Ascending aorta (tissue), 2 donors: ENCODE measurements at regions of chr15 and their contacts with region 1.

Region 1: DNA sequence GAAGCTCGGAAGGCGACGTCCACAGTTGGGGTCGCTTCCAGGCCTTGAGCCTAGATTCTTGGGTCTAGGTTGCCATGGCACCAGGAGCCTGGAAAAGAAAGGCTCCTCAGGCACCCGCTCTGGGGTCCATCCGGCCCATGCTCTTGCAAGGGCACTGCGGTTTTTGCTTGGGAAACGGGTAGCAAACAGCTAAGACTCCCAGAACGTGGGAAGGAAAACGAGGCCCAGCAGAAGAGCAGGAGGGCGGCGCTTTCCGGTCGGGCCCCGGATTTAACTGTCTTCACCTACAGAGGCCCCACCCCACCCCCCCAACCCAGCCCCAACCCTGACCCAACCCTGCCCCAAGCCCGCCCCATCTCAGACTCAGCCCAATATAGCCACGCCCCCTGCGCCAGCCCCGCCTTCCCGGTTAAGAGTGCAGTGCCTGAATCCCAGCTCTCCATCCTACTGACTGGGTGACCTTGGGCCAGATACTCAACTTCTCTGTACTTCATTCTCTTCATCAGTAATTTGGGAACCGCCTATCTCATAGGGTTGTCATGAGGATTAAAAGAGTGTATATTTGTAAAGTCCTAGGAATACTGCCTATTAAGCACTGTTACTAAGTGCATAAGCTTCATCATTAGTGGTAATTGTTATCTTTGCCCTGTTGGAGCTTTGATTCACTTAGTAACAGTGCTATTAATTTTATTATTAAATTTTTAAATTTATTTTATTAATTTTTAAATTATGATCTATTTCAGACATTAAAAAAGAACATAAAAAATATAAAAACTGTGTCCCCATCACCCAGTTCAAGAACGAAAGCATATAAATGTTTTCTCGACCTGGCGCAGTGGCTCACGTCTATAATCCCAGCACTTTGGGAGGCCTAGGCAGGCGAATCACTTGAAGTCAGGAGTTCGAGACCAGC is 28.4 kb upstream of the SMAD6 start:
- DNase-seq: no peak
- H3K4me3 ChIP-seq: no peak overlapping the region
- H3K27ac ChIP-seq: no peak overlapping the region
- H3K4me1 ChIP-seq: no peaks in the 10 kb centered on the region
- H3K27me3 ChIP-seq: no peaks in the 10 kb centered on the region
- CTCF ChIP-seq: no peak

Region 2: GRCh38 chr15:66747886-66748707 is 74.4 kb after region 1 on chr15:
- intact Hi-C with region 1: loop called (anchors 2 kb)
- DNase-seq: no peak
- H3K4me3 ChIP-seq: peak overlapping the region in 1 of 2 donors; percentile 4
- H3K27ac ChIP-seq: peak overlapping the region; percentile 71 to 83
- H3K4me1 ChIP-seq: peaks cover 18 to 71% of the 10 kb centered on the region in 2 donors
- H3K27me3 ChIP-seq: no peaks in the 10 kb centered on the region
- CTCF ChIP-seq: no peak